GM10248 (cell line): ENCODE measurements at regions of chr10 and their contacts with region 1.

Region 1: GRCh38 chr10:73785221-73785720 is at the start of gene ZSWIM8:
- DNase-seq: peak; percentile 91
- CTCF ChIP-seq: no peak

Region 2: DNA sequence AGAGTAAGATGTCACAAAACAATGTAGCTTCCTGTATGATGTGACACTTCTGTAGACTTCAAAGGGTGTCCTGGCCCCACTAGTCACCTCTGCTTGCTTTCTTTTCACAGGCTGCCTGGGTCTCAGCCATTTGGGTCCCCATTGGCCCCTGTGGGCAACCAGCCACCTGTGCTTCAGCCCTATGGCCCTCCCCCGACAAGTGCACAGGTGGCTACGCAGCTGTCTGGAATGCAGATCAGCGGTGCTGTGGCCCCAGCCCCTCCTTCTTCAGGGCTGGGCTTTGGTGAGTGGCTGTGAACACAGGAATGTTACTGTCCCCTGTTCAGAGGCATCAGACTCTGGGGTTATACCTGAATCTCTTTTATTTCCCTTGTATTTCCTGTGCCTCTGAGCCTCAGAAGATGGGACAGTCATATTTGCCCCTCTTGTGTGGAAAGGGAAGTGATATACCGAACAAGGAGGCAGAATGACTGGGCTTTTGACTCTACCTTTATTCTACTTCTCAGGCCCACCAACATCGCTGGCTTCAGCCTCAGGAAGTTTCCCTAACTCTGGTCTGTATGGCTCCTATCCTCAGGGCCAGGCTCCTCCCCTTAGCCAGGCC is 25.7 kb before region 1 on chr10:
- CTCF ChIA-PET with region 1: no interaction called
- POLR2A ChIA-PET with region 1: no interaction called
- DNase-seq: peak; percentile 38
- CTCF ChIP-seq: no peak

Region 3: GRCh38 chr10:73772280-73773151 is 12.8 kb before region 1 on chr10:
- CTCF ChIA-PET with region 1: interaction called, 12 read pairs
- POLR2A ChIA-PET with region 1: interaction called, 10 read pairs
- DNase-seq: peak; percentile 82
- CTCF ChIP-seq: no peak